Left ventricle myocardium superior (tissue), 1 donor: ENCODE measurements at regions of chr1 and their contacts with region 1.

Region 1: DNA sequence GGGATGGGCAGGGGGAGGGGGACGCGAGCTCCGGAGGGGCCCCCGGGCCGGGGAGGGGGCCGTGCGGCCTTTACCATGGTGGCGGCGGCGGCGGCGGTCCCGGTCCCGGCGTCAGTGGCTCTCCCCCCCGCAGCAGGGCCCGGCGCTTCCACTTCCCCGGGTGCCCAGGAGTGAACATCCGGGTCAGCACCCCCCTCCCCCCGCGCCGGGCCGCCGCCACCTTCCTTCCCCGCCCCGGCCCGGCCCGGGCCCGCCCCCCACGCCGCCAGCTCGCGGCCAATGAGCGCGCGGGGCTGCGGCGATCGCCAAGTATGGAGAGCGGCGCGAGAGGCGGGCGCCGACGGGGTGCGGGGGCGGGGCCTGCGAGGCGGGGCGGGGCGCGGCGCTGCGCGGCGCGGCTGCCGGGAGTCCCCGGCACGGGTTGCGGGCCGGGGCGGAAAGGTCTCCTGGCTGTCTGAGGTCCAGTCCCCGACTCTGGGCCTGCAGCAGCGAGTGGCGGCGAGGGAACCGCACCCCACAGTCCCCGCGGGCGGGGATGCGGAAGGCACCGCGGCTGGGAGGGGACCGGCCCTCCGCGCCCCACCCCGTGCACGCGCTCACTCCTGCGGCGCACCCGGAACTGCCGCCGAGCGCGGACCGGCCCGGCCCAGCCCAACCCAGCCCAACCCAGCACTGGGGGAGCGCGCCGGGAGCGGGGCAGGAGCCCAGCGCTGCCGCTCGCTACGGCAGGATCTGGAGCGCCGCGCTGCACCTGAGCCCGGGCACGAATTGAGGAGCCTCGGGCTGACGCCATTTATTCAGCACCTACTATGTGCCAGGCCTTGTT is at the start of gene CAPZB:
- DNase-seq: peak; percentile 98
- ATAC-seq: peak; percentile 90
- total RNA-seq, gene CAPZB: 252 TPM

Region 2: DNA sequence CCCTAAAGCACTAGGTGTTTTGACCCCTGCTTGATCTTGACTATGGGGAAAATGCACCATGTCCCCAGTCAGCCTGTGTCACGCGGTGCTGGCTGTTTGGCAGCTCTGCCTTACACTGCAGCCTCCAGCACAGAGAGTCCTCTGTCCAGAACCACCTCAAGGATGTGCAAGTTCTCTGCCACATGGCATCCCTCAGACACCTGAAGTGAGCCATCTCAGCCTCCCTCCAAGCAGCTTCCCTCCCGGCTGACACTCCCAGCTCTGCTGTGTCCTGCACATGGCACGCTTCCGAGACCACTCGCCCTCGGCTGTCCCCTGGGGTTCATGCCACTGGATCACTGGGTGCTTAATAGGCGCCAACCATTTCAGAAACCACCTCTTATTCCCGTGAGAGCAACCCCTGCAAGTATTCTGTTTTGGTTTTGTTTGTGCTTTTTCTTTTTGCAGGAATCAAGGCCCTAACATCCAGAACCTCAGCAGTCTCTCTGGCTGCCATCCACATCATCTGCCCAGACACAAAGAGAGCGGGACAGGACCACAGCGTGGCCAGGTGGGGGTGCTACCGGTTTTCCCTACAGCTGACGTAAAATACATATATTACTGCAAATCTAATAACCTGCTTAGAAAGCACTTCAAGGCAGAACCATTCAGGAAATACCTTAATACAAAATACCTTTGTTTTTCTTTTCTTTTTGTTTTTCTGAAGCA is 46.0 kb before region 1 on chr1:
- intact Hi-C with region 1: loop called (anchors 10 kb)
- DNase-seq: peak; percentile 79
- ATAC-seq: peak; percentile 57